Posterior vena cava (tissue), 2 donors: ENCODE measurements at regions of chr2 and their contacts with region 1.

Region 1: DNA sequence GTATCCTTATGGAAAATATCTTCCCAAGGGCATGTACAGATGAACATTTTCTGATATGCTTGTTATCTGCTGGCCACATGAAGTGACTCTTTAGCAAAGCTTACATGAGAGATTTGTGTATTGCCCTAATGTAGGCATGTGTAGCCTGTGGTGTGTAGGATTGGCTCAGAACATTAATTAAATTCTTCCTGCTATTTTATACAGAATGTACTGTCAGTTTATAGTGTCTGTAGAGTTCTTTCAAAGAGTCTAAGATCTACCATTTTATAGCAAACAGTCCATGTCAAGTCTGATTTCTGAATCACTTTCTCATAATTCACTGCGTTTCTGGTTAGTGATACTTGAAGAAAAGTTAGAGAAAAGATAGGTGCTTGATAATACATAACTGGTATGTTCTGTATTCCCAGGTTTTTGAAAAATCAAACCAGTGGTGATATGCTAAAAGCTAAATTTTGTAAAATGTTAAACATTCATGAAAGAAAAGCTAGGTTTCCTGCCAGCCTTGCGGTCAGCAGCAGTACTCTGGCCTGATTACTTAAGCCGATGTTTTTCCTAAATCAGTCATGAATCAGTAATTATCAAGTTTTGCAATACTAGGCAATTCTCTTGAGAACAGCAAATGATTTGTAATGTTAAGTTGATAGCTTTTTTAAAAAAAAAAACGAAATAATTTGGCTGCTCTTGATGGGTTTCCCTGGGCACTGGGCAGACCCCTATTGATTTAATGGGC is 30.9 kb upstream of the EFEMP1 start:
- DNase-seq: no peak

Region 2: DNA sequence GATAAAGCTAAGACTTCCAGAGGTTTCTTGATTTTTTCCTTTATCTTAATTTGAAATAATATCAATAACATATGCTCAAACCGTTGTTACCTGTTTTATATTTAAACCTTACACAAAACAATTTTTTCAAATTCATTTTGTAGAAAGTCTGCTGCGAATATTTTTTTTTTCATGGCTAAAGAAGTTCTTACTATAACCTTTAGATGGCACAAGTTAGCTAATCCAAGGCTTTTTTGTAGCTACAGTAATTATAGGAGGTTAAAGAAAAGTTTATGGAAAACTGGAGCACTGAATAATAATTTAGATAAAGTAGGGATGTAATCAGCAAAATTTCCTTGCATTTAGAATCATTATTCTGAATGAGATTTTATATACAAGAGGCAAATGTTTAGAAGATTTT is 182.9 kb before region 1 on chr2:
- intact Hi-C with region 1: loop called in 1 of 2 experiments (anchors 5 kb)
- DNase-seq: no peak

Region 3: GRCh38 chr2:56148825-56149224 is 194.4 kb after region 1 on chr2:
- intact Hi-C with region 1: no loop called
- DNase-seq: no peak

Region 4: GRCh38 chr2:56286936-56287335 is 332.5 kb after region 1 on chr2:
- intact Hi-C with region 1: no loop called
- DNase-seq: no peak